ENCODE measurements at regions of chr17 and their contacts with region 1.

Region 1: DNA sequence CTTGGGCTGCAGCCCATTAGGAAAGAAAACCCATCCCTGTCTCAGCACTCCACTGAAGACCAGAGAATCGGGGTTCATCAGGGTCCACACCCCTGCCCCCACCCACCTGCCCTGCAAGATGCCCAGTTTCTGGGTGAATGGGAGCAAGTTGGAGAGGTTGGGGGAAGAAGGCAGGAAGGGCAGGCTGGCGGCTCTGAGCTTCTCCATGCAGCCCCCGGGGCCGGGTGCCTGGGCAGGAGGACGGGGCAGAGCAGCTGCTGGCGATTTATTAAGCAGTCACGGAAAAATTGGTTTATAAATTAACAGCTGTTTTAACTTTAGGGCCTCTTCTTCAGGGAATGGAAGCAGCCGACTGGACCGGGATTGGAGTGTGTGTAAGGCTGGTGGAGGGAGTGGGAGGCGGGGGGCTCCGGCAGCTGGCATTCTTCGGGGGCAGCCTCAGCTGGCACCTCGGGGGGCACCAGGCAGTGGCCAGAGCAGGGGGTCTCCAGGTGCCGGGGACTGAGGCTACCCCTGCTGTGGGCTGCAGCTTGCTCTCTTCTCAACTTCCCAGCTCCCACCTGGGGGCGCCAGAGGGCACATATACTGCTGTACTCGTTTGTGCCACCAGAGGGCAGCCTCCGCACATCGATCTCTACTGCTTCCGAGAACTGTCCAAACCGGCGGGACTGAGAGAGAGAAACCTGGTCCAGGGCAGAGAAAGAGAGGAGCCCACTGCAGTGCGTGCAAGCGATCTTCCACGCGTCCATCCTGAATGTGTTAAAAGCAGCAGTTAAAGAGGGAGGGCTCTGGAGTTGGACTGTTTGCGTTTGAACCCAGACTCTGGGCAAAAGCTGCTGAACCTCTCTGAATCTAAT is 5.0 kb upstream of the PPP1R1B start:
- DNase-seq: peak; percentile 100
- H3K4me3 Mint-ChIP-seq: peak overlapping the region; percentile 18
- H3K27ac Mint-ChIP-seq: peak overlapping the region; percentile 3
- H3K4me1 Mint-ChIP-seq: peaks cover 55% of the 10 kb centered on the region
- H3K27me3 Mint-ChIP-seq: peaks cover 83% of the 10 kb centered on the region
- CTCF ChIP-seq: no peak

Region 2: DNA sequence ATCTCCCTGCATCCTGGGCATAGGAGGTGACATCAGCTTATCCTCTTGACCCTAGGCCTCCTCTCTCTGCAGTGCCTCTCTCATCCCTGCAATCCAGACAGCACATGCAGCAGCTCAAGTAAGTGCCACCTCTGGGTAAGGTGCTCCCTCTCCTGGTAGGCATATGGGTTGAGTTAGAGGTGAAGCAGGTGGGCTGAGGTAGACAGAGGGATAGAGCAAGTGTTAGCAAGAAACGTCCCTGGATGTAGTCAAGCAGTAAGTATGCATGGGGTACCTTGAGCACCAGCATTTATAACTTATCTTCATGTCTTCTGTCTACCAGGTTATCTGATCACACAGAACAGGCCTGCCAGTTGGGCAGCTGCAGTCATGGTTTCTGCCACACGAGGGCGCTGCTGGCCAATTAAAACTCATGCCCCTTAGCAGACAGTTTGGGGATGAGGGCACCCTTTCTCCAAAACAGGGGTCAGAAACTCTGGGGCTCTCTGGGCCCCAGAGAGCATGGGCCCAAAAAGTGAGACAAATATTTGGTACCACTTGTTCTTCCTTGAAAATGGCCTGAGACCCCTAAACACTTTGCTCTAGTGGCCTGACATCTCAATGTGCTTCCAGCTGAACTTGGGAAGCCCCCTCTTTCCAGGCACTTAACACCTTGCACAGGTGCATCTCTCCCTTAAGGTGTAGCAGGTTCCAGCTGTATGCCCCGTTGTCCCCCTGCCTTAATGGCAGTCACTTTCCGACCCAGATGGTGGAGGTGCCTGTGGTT is 73.9 kb before region 1 on chr17:
- CTCF ChIA-PET with region 1: interaction called, 382 read pairs
- intact Hi-C with region 1: loop called (anchors 1 kb)
- DNase-seq: peak; percentile 96
- H3K4me3 Mint-ChIP-seq: no peak overlapping the region
- H3K27ac Mint-ChIP-seq: no peak overlapping the region
- H3K4me1 Mint-ChIP-seq: peaks cover 12% of the 10 kb centered on the region
- H3K27me3 Mint-ChIP-seq: no peaks in the 10 kb centered on the region
- CTCF ChIP-seq: peak; percentile 100

Region 3: GRCh38 chr17:39704821-39705551 is 83.2 kb after region 1 on chr17:
- CTCF ChIA-PET with region 1: interaction called, 42,089 read pairs
- intact Hi-C with region 1: loop called (anchors 1 kb)
- DNase-seq: peak; percentile 99
- H3K4me3 Mint-ChIP-seq: peak overlapping the region; percentile 71
- H3K27ac Mint-ChIP-seq: peak overlapping the region; percentile 67
- H3K4me1 Mint-ChIP-seq: peaks cover 92% of the 10 kb centered on the region
- H3K27me3 Mint-ChIP-seq: no peaks in the 10 kb centered on the region
- CTCF ChIP-seq: no peak

Region 4: GRCh38 chr17:39813631-39814030 is 191.9 kb after region 1 on chr17:
- CTCF ChIA-PET with region 1: interaction called, 357 read pairs
- intact Hi-C with region 1: no loop called
- DNase-seq: peak; percentile 64
- H3K4me3 Mint-ChIP-seq: no peak overlapping the region
- H3K27ac Mint-ChIP-seq: no peak overlapping the region
- H3K4me1 Mint-ChIP-seq: peaks cover 19% of the 10 kb centered on the region
- H3K27me3 Mint-ChIP-seq: no peaks in the 10 kb centered on the region
- CTCF ChIP-seq: no peak

Region 5: GRCh38 chr17:39927101-39927928 is 305.6 kb after region 1 on chr17 and contains the starts of genes LRRC3C and ORMDL3:
- CTCF ChIA-PET with region 1: interaction called, 4,313 read pairs
- intact Hi-C with region 1: loop called (anchors 1 kb)
- DNase-seq: no peak
- H3K4me3 Mint-ChIP-seq: peak within 1 kb of the TSS; percentile 74
- H3K27ac Mint-ChIP-seq: peak within 1 kb of the TSS; percentile 66
- H3K4me1 Mint-ChIP-seq: peaks cover 60% of the 10 kb centered on the region
- H3K27me3 Mint-ChIP-seq: no peaks in the 10 kb centered on the region
- CTCF ChIP-seq: no peak
- total RNA-seq, gene LRRC3C: not detected in 2 replicates
- total RNA-seq, gene ORMDL3: 1,738 and 1,968 TPM in 2 replicates

Region 6: DNA sequence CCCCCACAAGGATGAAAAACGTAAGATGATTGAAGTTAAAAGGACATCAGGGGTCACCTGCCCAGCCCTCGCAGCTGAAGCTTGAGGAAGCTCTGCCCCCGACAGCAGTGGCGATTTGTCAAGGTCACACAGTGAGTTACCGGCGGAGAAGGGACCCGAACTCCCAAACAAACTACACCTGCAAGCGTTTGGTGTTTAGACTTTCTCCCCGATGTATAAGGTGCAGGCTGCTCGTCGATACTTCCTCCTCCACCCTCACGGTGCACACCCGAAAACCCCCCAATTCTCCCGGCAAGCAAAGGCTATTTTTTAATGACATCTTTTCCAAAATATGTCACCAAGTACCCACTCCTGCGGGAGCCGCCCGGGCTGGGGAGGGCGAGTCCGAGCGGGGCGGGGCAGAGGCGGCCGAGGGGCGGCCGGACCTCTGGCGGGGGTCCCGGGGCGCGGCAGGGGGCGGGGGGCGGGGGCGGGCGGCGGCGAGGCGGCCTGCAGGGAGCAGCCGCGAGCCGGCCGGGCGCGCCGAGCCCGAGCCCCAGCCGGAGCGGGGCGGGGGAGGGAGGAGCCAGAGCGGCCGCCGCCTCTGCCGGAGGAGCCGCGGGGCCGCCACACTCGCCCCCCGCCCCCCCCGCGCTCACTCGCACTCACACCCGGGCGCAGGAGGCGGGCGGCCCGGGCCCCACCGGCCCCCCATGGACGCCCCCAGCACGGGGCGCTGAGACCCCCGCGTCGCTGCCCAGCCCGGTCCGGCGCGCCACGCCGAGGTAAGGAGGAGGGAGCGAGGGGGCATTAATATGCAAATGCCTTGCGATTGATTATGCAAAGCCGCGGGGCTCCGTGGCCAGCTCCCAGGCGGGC is 440.8 kb after region 1 on chr17 and contains the start of gene THRA:
- CTCF ChIA-PET with region 1: interaction called, 11 read pairs
- intact Hi-C with region 1: no loop called
- DNase-seq: peak; percentile 100
- H3K4me3 Mint-ChIP-seq: peak within 1 kb of the TSS; percentile 54
- H3K27ac Mint-ChIP-seq: peak within 1 kb of the TSS; percentile 27
- H3K4me1 Mint-ChIP-seq: peaks cover 55% of the 10 kb centered on the region
- H3K27me3 Mint-ChIP-seq: peaks cover 52% of the 10 kb centered on the region
- CTCF ChIP-seq: no peak
- total RNA-seq, gene THRA: 107 and 133 TPM in 2 replicates

Region 7: DNA sequence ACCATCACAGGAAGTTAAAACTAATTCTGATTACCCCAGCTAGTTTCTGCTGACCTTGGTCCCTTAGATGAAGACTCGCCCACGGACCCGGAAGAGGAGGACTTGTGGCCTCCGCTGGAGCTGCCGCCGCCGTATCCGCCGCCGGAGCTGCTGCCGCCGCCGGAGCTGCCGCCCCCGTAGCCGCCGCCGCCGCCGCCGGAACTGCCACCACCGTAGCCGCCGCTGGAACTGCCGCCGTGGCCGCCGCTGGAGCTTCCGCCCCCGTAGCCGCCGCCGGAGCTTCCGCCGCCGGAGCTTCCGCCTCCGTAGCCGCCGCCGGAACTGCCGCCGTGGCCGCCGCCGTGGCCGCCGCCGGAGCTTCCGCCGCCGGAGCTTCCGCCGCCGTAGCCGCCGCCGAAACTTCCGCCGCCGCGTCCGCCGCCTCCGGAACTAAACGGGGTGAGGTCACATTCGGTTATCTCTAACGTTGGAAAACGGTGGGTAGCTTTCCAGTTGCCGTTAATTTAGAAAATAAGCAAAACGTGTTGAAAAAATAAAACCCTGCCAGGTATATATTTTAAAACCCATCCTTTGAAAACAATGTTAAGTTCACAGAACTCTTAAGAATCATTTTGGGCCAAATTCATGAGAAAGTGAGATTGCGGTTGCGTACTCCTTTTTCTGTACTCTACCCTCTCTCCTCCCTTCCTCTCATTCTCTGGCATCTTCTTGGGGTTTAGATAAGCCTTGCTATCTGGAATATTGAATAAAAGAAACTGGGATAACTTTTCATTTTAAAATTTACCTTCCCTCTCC is 1197.2 kb after region 1 on chr17:
- CTCF ChIA-PET with region 1: interaction called, 12 read pairs
- intact Hi-C with region 1: no loop called
- DNase-seq: peak; percentile 100
- H3K4me3 Mint-ChIP-seq: peak overlapping the region; percentile 80
- H3K27ac Mint-ChIP-seq: peak overlapping the region; percentile 92
- H3K4me1 Mint-ChIP-seq: peaks cover 31% of the 10 kb centered on the region
- H3K27me3 Mint-ChIP-seq: no peaks in the 10 kb centered on the region
- CTCF ChIP-seq: no peak

Measured in Calu3 (cell line).